ENCODE measurements at regions of chr2 and their contacts with region 1.

Region 1: GRCh38 chr2:134918526-134919340 is at the start of gene CCNT2:
- DNase-seq: peak; percentile 99
- H3K4me3 ChIP-seq: peak within 1 kb of the TSS; percentile 89 to 96 (median 92)
- H3K27ac ChIP-seq: peak within 1 kb of the TSS; percentile 96 to 98 (median 98)
- H3K4me1 ChIP-seq: peaks cover 0 to 49% (median 40%) of the 10 kb centered on the region in 4 donors
- H3K27me3 ChIP-seq: no peaks in the 10 kb centered on the region
- CTCF ChIP-seq: no peak
- EP300 ChIP-seq: peak in 1 of 4 donors; percentile 78
- POLR2A ChIP-seq: no peak
- total RNA-seq, gene CCNT2: 27.4 to 33.2 (median 32.1) TPM

Region 2: DNA sequence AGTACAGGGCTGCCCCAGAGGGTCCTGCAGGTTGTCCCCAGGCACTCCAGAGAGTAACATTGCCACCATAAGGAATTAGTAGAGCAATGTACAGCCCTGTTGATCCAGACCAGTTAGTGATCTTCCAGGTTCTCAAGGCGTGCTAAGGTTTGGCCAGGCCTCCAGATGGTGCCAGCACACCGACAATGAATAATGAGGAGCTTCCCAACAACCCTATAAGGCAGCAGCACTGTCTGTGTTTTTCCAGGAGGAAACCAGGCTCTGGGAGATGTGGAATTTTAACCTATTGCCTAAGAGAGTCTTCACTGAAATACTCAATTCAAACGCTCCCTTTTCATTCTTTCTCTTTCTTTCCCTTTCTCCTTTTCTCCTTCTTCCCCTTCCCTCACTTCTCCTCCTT is 542.8 kb before region 1 on chr2:
- intact Hi-C with region 1: loop called (anchors 10 kb)
- DNase-seq: peak; percentile 85
- H3K4me3 ChIP-seq: no peak overlapping the region
- H3K27ac ChIP-seq: peak overlapping the region; percentile 63 to 81 (median 74)
- H3K4me1 ChIP-seq: peaks cover 0 to 55% (median 40%) of the 10 kb centered on the region in 4 donors
- H3K27me3 ChIP-seq: no peaks in the 10 kb centered on the region
- CTCF ChIP-seq: peak in 3 of 4 experiments; percentile 24 to 34 (median 25)
- EP300 ChIP-seq: no peak
- POLR2A ChIP-seq: no peak

Region 3: GRCh38 chr2:135052042-135052876 is 133.5 kb after region 1 on chr2 and contains the start of gene RAB3GAP1:
- intact Hi-C with region 1: loop called (anchors 2 kb)
- DNase-seq: peak; percentile 80
- H3K4me3 ChIP-seq: peak within 1 kb of the TSS; percentile 65 to 78 (median 76)
- H3K27ac ChIP-seq: peak within 1 kb of the TSS; percentile 90 to 95 (median 91)
- H3K4me1 ChIP-seq: peaks cover 0 to 40% (median 30%) of the 10 kb centered on the region in 4 donors
- H3K27me3 ChIP-seq: no peaks in the 10 kb centered on the region
- CTCF ChIP-seq: no peak
- EP300 ChIP-seq: no peak
- POLR2A ChIP-seq: peak in 1 of 2 donors; percentile 50
- total RNA-seq, gene RAB3GAP1: 54.5 to 70.2 (median 60.9) TPM

Region 4: GRCh38 chr2:135531231-135532228 is 612.8 kb after region 1 on chr2 and contains the start of gene R3HDM1:
- intact Hi-C with region 1: loop called (anchors 1 kb)
- DNase-seq: peak; percentile 100
- H3K4me3 ChIP-seq: peak within 1 kb of the TSS; percentile 64 to 98 (median 88)
- H3K27ac ChIP-seq: peak within 1 kb of the TSS; percentile 90 to 93 (median 92)
- H3K4me1 ChIP-seq: peaks cover 0 to 25% (median 6%) of the 10 kb centered on the region in 4 donors
- H3K27me3 ChIP-seq: no peaks in the 10 kb centered on the region
- CTCF ChIP-seq: peak in 1 of 4 experiments; percentile 2
- EP300 ChIP-seq: no peak
- POLR2A ChIP-seq: peak in 1 of 2 donors; percentile 6
- total RNA-seq, gene R3HDM1: 12.0 to 34.6 (median 15.8) TPM

Measured in sigmoid colon (tissue), 7 donors.